Common myeloid progenitor, CD34-positive (primary cell): ENCODE measurements at regions of chr11 and their contacts with region 1.

Region 1: GRCh38 chr11:57815476-57815875 is 53.9 kb downstream of the CTNND1 start:
- DNase-seq: no peak
- H3K4me3 ChIP-seq: no peak overlapping the region
- H3K27ac ChIP-seq: no peak overlapping the region
- H3K4me1 ChIP-seq: no peaks in the 10 kb centered on the region
- H3K27me3 ChIP-seq: no peaks in the 10 kb centered on the region

Region 2: GRCh38 chr11:57751676-57752253 is 63.7 kb before region 1 on chr11 and contains the start of gene BTBD18:
- CTCF ChIA-PET with region 1: no interaction called
- POLR2A ChIA-PET with region 1: interaction called, 13 read pairs
- DNase-seq: peak; percentile 25 to 42 (median 40)
- H3K4me3 ChIP-seq: no peak within 1 kb of the TSS
- H3K27ac ChIP-seq: no peak within 1 kb of the TSS
- H3K4me1 ChIP-seq: no peaks in the 10 kb centered on the region
- H3K27me3 ChIP-seq: no peaks in the 10 kb centered on the region